Caco-2 (cell line): ENCODE measurements at regions of chr3 and their contacts with region 1.

Region 1: GRCh38 chr3:52836986-52837385 is 2.2 kb upstream of the MUSTN1 start:
- DNase-seq: no peak
- H3K4me3 ChIP-seq: no peak overlapping the region
- H3K4me3 Mint-ChIP-seq: no peak overlapping the region
- H3K27ac Mint-ChIP-seq: no peak overlapping the region
- H3K4me1 ChIP-seq: peaks cover 9% of the 10 kb centered on the region; the same call in 1 of the 2 replicates
- H3K4me1 Mint-ChIP-seq: peaks cover 6% of the 10 kb centered on the region
- H3K27me3 ChIP-seq: no peaks in the 10 kb centered on the region
- H3K27me3 Mint-ChIP-seq: no peaks in the 10 kb centered on the region
- CTCF ChIP-seq: no peak

Region 2: GRCh38 chr3:52770496-52771333 is 66.3 kb before region 1 on chr3 and contains the start of gene NEK4:
- CTCF ChIA-PET with region 1: no interaction called
- POLR2A ChIA-PET with region 1: no interaction called
- intact Hi-C with region 1: no loop called
- DNase-seq: peak; percentile 94
- H3K4me3 ChIP-seq: peak within 1 kb of the TSS; percentile 88
- H3K4me3 Mint-ChIP-seq: peak within 1 kb of the TSS; percentile 81
- H3K27ac Mint-ChIP-seq: peak within 1 kb of the TSS; percentile 69
- H3K4me1 ChIP-seq: peaks cover 12% of the 10 kb centered on the region
- H3K4me1 Mint-ChIP-seq: peaks cover 26% of the 10 kb centered on the region
- H3K27me3 ChIP-seq: no peaks in the 10 kb centered on the region
- H3K27me3 Mint-ChIP-seq: no peaks in the 10 kb centered on the region
- CTCF ChIP-seq: peak in 1 of 2 experiments; percentile 1
- total RNA-seq, gene NEK4: 39.2 and 40.5 TPM in 2 replicates

Region 3: DNA sequence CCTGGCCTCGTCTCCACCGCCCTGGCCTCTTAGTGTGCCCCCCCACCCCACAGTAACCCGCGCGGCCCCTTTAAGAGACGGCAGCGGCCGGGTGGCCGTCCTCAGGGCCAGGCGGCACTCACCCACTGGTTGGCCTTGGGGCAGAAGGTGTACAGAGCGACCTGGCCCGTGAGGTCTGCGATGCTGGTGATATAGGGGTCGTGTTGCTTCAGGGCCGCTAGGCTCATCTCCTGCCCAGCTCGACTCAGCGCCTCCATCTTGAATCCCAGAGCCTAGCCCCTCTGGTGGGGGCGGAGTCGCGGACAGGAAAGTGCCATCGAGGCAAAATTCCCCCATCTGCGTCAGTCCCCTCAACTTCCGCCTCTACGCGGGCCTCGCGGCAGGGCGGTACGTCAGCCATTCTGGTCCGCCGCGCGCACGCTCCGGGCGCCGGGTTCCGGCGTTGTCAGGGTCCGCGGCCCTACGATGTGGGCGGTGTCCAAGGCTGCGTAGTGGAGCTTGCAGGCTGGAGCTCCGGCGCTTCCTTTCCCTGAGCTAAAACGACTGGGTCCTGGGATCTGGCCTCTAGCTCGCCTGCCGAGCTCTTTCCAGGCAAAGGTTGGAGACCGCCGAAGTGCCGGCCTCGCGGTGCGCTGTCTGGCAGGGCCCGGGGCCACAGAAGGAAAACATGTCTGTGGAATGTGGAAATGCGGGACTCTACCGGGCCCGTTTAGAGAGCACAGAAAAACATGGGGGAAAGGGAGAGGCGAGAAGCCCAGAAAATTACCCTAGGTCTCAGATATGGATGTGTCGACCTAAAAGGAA is 510.5 kb after region 1 on chr3 and contains the start of gene DCP1A:
- CTCF ChIA-PET with region 1: interaction called, 15 read pairs
- POLR2A ChIA-PET with region 1: no interaction called
- intact Hi-C with region 1: no loop called
- DNase-seq: peak; percentile 95 to 97
- H3K4me3 ChIP-seq: peak within 1 kb of the TSS; percentile 100
- H3K4me3 Mint-ChIP-seq: peak within 1 kb of the TSS; percentile 91
- H3K27ac Mint-ChIP-seq: peak within 1 kb of the TSS; percentile 98
- H3K4me1 ChIP-seq: peaks cover 39% of the 10 kb centered on the region
- H3K4me1 Mint-ChIP-seq: peaks cover 26% of the 10 kb centered on the region
- H3K27me3 ChIP-seq: no peaks in the 10 kb centered on the region
- H3K27me3 Mint-ChIP-seq: no peaks in the 10 kb centered on the region
- CTCF ChIP-seq: no peak
- total RNA-seq, gene DCP1A: 32.5 and 32.9 TPM in 2 replicates

Region 4: GRCh38 chr3:53412953-53413352 is 576.0 kb after region 1 on chr3:
- CTCF ChIA-PET with region 1: no interaction called
- POLR2A ChIA-PET with region 1: no interaction called
- intact Hi-C with region 1: no loop called
- DNase-seq: no peak
- H3K4me3 ChIP-seq: no peak overlapping the region
- H3K4me3 Mint-ChIP-seq: no peak overlapping the region
- H3K27ac Mint-ChIP-seq: no peak overlapping the region
- H3K4me1 ChIP-seq: 0 out of 2 replicates have a peak, but pooled peaks cover 6% of the 10 kb centered on the region
- H3K4me1 Mint-ChIP-seq: peaks cover 11% of the 10 kb centered on the region
- H3K27me3 ChIP-seq: no peaks in the 10 kb centered on the region
- H3K27me3 Mint-ChIP-seq: no peaks in the 10 kb centered on the region
- CTCF ChIP-seq: no peak